ENCODE measurements at regions of chr16 and their contacts with region 1.

Region 1: DNA sequence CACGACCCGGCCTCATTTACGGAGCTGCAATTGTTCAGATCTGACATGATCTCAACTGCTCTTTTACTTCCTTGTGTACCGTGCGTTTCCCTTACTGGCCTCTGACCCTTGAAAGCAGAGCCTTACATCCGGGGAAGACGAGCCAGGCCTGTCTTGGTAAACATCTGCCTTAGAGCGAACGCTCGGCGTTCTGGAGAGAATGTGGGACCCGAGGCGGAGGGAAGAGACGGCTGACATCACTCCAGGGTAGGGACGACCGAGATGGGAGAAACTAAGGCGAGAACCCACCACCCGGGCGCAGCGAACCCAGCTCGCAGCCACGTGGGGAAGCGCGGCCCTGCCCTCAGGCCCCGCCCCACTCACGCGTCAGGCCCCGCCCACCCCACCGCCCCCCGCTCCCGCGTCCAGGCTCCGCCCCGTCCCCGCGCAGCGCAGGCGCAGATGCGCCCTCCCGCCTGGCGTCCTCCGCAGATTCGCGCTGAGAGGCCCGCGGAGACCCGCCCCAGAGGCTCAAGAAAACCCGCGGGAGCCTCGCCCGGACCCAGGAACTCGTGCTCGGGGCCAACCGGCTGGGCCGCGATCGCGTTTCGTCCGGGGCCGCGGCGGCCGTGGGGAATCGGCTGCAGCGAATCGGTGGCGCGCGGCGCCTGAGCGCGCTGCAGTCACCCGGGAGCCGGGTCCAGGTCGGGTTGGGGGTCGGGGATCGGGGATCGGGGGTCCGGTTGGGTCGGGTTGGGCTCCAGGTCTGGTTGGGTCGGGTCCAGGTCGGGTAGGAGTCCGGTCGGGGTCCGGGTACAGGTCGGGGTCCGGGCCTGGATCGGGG is at the start of gene TELO2:
- DNase-seq: peak; percentile 76 to 96 (median 90)
- ATAC-seq: peak; percentile 88
- H3K4me3 Mint-ChIP-seq: peak within 1 kb of the TSS; percentile 91 to 99 (median 97)
- H3K27ac Mint-ChIP-seq: peak within 1 kb of the TSS; percentile 97 to 100 (median 100)
- H3K4me1 Mint-ChIP-seq: peaks cover 2 to 33% (median 15%) of the 10 kb centered on the region in 4 donors
- H3K27me3 Mint-ChIP-seq: no peaks in the 10 kb centered on the region
- polyA plus RNA-seq, gene TELO2: 9.8 to 18.1 (median 14.9) TPM

Region 2: GRCh38 chr16:1474796-1475551 is 18.2 kb before region 1 on chr16 and contains the start of gene CLCN7:
- POLR2A ChIA-PET with region 1: interaction called, 15 read pairs
- DNase-seq: peak; percentile 76 to 91 (median 84)
- ATAC-seq: peak; percentile 90 to 94
- H3K4me3 Mint-ChIP-seq: peak within 1 kb of the TSS; percentile 72 to 90 (median 85)
- H3K27ac Mint-ChIP-seq: peak within 1 kb of the TSS; percentile 73 to 96 (median 91)
- H3K4me1 Mint-ChIP-seq: peaks cover 22 to 47% (median 41%) of the 10 kb centered on the region in 4 donors
- H3K27me3 Mint-ChIP-seq: no peaks in the 10 kb centered on the region
- polyA plus RNA-seq, gene CLCN7: 18.7 to 34.7 (median 24.2) TPM

Region 3: GRCh38 chr16:1533443-1533951 is 40.4 kb after region 1 on chr16 and contains the start of gene TMEM204:
- POLR2A ChIA-PET with region 1: interaction called, 37 read pairs
- DNase-seq: peak in 8 of 10 donors; percentile 15 to 73 (median 50)
- ATAC-seq: peak; percentile 57 to 59
- H3K4me3 Mint-ChIP-seq: peak within 1 kb of the TSS; percentile 96 to 99 (median 98)
- H3K27ac Mint-ChIP-seq: peak within 1 kb of the TSS; percentile 90 to 97 (median 94)
- H3K4me1 Mint-ChIP-seq: peaks cover 25 to 54% (median 48%) of the 10 kb centered on the region in 4 donors
- H3K27me3 Mint-ChIP-seq: no peaks in the 10 kb centered on the region
- polyA plus RNA-seq, gene TMEM204: 95.9 to 135 (median 125) TPM

Region 4: DNA sequence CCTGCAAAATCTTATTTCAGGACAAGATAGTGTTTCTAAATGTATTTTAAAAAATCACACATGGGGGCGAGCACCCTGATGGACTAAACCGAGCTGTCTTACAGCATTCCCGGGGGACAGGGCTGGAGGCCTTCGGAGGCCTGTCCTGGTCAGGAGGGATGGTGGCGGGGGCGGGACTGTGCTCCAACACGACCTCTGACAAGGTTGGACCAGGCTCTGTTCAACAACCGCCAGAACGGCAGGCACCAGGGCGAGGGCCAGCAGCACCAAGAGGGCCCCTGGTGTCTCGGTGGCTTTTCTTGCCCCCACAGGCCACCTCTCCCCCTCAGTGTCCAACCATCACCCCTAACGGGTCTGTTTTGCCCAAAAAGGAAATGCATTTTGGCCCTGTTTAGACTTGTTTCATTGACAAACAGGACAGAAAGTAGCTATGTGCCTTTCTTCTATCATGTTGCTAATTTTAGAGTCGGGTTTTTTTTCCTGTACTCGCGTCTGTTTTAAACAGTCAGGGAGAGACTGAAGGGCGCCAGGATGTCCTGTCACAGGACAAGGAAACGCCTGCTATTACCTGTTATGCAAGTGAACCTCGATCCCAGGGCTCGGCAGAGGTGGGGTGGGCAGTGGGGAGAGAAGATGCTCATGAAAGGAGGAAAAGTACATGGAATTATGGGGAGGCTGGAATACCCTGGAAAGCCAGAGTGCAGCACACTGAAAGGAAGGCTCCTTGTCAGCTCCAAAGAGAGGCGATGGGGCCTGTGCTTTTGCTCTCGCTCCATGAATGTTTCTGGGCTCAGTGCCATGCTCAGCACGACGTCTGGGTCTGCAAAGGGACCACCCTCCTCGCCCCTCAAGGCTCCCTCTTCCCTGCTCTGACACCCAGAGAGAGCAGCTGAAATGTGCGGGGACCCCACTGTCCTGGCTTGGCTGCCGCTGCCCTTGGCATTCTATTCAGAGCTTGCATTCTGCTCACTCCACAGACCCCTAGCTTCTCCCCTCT is 52.2 kb after region 1 on chr16:
- POLR2A ChIA-PET with region 1: no interaction called
- DNase-seq: no peak
- ATAC-seq: peak in 1 of 2 donors; percentile 28
- H3K4me3 Mint-ChIP-seq: peak overlapping the region; percentile 12 to 81 (median 76)
- H3K27ac Mint-ChIP-seq: peak overlapping the region; percentile 28 to 93 (median 84)
- H3K4me1 Mint-ChIP-seq: peaks cover 33 to 95% (median 85%) of the 10 kb centered on the region in 4 donors
- H3K27me3 Mint-ChIP-seq: no peaks in the 10 kb centered on the region